ENCODE measurements at regions of chr9 and their contacts with region 1.

Region 1: GRCh38 chr9:134099123-134099787 is 31.4 kb upstream of the BRD3 start:
- DNase-seq: no peak
- H3K4me3 ChIP-seq: no peak overlapping the region
- H3K27ac ChIP-seq: no peak overlapping the region
- H3K4me1 ChIP-seq: no peaks in the 10 kb centered on the region
- H3K27me3 ChIP-seq: peaks cover 0 to 9% (median 0%) of the 10 kb centered on the region in 4 donors
- CTCF ChIP-seq: peak; percentile 65 to 75 (median 73)
- EP300 ChIP-seq: no peak
- POLR2A ChIP-seq: no peak

Region 2: DNA sequence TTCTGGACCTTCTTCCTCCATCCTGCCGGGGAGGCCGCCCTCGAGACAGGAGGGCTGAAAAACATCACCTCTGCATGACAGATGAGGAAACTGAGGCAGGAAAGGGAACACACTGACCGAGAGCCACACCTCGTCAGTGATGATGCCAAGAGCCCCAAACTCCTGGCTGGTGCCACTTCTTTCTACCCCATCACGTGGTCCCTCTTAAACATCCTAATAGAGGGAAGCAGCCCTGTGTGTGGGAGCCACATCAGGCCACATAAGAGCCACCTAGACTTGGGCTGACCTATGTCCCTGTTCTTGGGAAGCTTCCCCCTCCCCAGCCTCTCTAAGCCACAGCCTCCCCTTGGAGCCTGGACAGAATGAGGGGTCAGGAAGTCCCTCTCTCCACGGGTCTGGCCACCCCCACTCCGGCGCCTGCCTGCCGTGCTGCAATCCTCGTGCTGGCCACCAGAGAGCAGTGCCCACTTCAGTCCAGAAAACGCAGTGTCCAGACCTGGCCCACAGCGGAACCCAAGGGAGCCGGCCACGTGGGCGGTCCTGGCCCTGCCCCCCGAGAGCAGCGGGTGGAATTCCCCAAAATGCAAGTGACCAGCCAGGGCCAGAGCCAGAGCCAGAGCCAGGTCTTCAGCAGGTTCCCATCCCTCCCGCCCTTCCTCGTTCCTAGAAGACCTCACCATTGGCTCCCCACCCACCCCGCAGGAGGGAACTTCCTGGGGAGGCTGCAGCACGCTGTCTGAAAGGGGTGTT is 306.4 kb before region 1 on chr9:
- intact Hi-C with region 1: loop called (anchors 10 kb)
- DNase-seq: peak; percentile 95
- H3K4me3 ChIP-seq: peak overlapping the region in 2 of 4 donors; percentile 17 to 22
- H3K27ac ChIP-seq: no peak overlapping the region
- H3K4me1 ChIP-seq: peaks cover 19 to 34% (median 31%) of the 10 kb centered on the region in 4 donors
- H3K27me3 ChIP-seq: no peaks in the 10 kb centered on the region
- CTCF ChIP-seq: peak; percentile 95 to 96 (median 96)
- EP300 ChIP-seq: no peak
- POLR2A ChIP-seq: no peak

Measured in esophagus muscularis mucosa (tissue), 4 donors.